ENCODE measurements at regions of chr5 and their contacts with region 1.

Region 1: GRCh38 chr5:173472141-173472543 is 143.9 kb upstream of the STC2 start:
- DNase-seq: peak; percentile 47 to 96 (median 84)
- H3K4me3 ChIP-seq: peak overlapping the region in 6 of 59 donors; percentile 3 to 31 (median 8)
- H3K27ac ChIP-seq: peak overlapping the region; percentile 76 to 100 (median 97)
- H3K27me3 ChIP-seq: no peaks in the 10 kb centered on the region
- CTCF ChIP-seq: peak in 11 of 56 donors; percentile 10 to 49 (median 28)

Region 2: GRCh38 chr5:172380987-172381643 is 1091.0 kb before region 1 on chr5:
- intact Hi-C with region 1: no loop called
- DNase-seq: peak; percentile 84 to 94 (median 90)
- H3K4me3 ChIP-seq: peak overlapping the region in 46 of 59 donors; percentile 2 to 57 (median 36)
- H3K27ac ChIP-seq: peak overlapping the region in 55 of 59 donors; percentile 5 to 84 (median 65)
- H3K27me3 ChIP-seq: no peaks in the 10 kb centered on the region
- CTCF ChIP-seq: peak in 7 of 56 donors; percentile 11 to 35 (median 20)

Region 3: GRCh38 chr5:173324115-173325001 is 147.8 kb before region 1 on chr5:
- intact Hi-C with region 1: loop called in 1 of 2 experiments (anchors 5 kb)
- DNase-seq: peak; percentile 18 to 90 (median 81)
- H3K4me3 ChIP-seq: peak overlapping the region in 40 of 59 donors; percentile 1 to 59 (median 34)
- H3K27ac ChIP-seq: no peak overlapping the region
- H3K27me3 ChIP-seq: peaks cover 0 to 90% (median 58%) of the 10 kb centered on the region in 45 donors
- CTCF ChIP-seq: peak in 9 of 56 donors; percentile 8 to 38 (median 21)

Region 4: DNA sequence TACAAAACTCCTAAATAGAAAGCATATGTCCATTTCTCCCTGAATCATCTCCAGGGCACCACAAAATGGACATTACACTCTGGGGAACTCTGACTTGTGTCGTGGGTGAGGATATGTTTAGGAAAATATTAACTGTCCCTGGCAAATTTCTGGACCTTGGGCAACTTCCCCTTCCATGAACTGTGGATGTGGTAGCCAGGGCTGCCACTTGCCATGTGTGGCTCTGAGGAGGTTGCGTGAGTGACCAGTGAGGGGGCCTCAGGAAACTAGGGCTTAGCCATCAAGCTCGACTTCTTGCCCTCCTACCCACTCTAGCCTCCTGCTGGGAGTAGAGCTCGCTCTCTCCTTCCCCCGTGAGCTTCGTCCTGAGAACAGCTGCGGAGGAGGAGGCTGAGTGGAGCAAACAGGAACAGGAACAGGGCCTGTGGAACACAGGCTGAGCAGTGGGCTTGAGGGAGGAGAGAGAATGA is 130.1 kb before region 1 on chr5:
- intact Hi-C with region 1: no loop called
- DNase-seq: no peak
- H3K4me3 ChIP-seq: no peak overlapping the region
- H3K27ac ChIP-seq: no peak overlapping the region
- H3K27me3 ChIP-seq: peaks cover 0 to 6% (median 0%) of the 10 kb centered on the region in 45 donors
- CTCF ChIP-seq: no peak

Region 5: GRCh38 chr5:173557123-173557903 is 85.2 kb after region 1 on chr5:
- intact Hi-C with region 1: loop called (anchors 1 kb)
- DNase-seq: peak; percentile 17 to 97 (median 92)
- H3K4me3 ChIP-seq: peak overlapping the region in 5 of 59 donors; percentile 13 to 39 (median 33)
- H3K27ac ChIP-seq: peak overlapping the region; percentile 79 to 100 (median 95)
- H3K27me3 ChIP-seq: peaks cover 0 to 14% (median 0%) of the 10 kb centered on the region in 45 donors
- CTCF ChIP-seq: peak in 7 of 56 donors; percentile 5 to 39 (median 19)

Region 6: GRCh38 chr5:173573126-173573960 is 101.2 kb after region 1 on chr5:
- intact Hi-C with region 1: loop called in 1 of 2 experiments (anchors 5 kb)
- DNase-seq: peak; percentile 69 to 92 (median 78)
- H3K4me3 ChIP-seq: peak overlapping the region in 45 of 59 donors; percentile 5 to 59 (median 39)
- H3K27ac ChIP-seq: peak overlapping the region in 16 of 59 donors; percentile 5 to 65 (median 30)
- H3K27me3 ChIP-seq: no peaks in the 10 kb centered on the region
- CTCF ChIP-seq: peak; percentile 92 to 100 (median 98)

Region 7: GRCh38 chr5:174235221-174236011 is 763.3 kb after region 1 on chr5:
- intact Hi-C with region 1: no loop called
- DNase-seq: no peak
- H3K4me3 ChIP-seq: no peak overlapping the region
- H3K27ac ChIP-seq: no peak overlapping the region
- H3K27me3 ChIP-seq: no peaks in the 10 kb centered on the region
- CTCF ChIP-seq: no peak